ENCODE measurements at regions of chr20 and their contacts with region 1.

Region 1: DNA sequence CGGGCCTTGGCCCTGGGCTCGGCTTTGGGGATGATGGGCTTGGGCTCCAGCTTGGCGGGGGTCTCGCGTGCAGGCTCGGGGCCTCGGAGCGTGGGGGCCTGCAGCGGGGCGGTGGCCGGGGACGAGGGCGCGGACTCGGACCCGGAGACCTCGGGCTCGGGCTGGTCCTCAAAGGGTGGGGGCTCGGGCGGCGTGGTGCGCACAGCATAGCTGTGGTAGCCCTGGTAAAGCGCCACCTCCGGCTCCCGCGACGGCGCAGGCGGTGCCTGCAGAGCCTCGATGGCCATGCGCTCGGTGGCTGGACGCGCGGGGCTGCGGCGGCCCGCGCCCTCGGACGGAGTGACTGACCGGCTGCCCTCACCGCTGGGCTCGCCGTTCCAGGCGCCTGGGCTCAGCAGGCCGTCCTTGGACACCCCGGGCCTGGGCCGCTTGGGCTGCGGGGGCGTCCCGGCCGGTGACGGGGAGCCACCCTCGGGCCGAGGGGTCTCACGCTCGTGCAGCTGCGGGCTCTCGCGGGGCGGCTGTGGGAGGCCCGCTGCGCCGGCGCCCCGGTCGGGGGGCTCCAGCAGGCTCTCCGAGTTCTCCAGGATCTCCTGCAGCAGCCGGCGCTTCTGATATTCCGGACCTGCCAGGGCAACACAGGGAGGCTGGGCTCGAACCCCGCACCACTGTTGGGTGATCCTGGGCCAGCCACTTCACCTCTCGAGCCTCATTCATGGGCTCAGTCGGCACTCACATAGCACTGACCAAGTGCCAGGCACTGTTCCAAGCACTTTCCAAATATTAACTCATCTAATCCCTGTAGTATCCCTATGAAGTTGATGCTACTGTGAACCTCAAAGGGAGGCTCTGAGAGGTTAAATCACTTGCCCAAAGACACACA is 71.0 kb downstream of the JPH2 start:
- DNase-seq: no peak
- ATAC-seq: no peak
- H3K4me3 ChIP-seq: no peak overlapping the region
- H3K4me3 Mint-ChIP-seq: no peak overlapping the region
- H3K27ac ChIP-seq: no peak overlapping the region
- H3K27ac Mint-ChIP-seq: no peak overlapping the region
- H3K4me1 ChIP-seq: no peaks in the 10 kb centered on the region
- H3K4me1 Mint-ChIP-seq: peaks cover 3% of the 10 kb centered on the region
- H3K27me3 ChIP-seq: peaks cover 0 to 20% (median 5%) of the 10 kb centered on the region in 4 experiments
- H3K27me3 Mint-ChIP-seq: peaks cover 48% of the 10 kb centered on the region
- CTCF ChIP-seq: no peak

Region 2: DNA sequence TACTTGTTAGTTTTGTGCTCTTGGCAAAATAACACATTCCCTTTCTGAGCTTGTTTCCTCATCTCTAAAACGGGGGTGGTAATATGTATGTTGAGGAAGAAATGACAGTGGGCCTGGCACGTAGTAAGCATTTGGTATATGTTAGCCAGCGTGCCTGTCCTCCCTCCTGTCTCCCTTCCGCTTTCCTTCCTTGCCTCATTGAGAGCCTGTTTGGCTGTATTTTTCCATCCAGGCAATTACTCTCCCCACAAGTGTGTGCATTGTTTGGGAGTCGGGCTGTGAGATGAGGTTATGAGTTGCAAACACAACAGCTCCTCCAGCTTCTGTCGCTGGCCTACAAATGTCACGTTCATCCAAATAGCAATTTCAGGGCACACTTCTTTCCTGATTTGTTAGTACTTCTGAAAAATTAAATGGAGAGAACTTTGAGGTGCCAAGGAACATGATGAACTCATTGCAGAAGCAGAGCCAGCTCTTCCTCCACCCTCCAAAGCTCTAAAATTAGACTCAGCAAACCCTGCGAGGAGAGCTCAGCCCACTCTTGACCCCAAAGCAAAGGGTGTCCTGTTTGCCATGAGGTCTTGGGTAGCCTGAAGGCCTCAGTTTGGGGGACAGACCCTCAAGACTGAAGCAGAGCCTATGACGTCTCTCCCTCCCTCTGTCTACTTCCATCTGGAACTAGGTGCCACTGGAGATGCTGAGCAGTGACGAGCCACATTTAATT is 252.0 kb before region 1 on chr20:
- CTCF ChIA-PET with region 1: no interaction called
- POLR2A ChIA-PET with region 1: no interaction called
- intact Hi-C with region 1: no loop called
- DNase-seq: no peak
- ATAC-seq: no peak
- H3K4me3 ChIP-seq: no peak overlapping the region
- H3K4me3 Mint-ChIP-seq: no peak overlapping the region
- H3K27ac ChIP-seq: no peak overlapping the region
- H3K27ac Mint-ChIP-seq: no peak overlapping the region
- H3K4me1 ChIP-seq: no peaks in the 10 kb centered on the region
- H3K4me1 Mint-ChIP-seq: no peaks in the 10 kb centered on the region
- H3K27me3 ChIP-seq: peaks cover 0 to 3% (median 0%) of the 10 kb centered on the region in 4 experiments
- H3K27me3 Mint-ChIP-seq: peaks cover 5% of the 10 kb centered on the region
- CTCF ChIP-seq: no peak

Region 3: GRCh38 chr20:43963872-43964791 is 151.9 kb before region 1 on chr20:
- CTCF ChIA-PET with region 1: no interaction called
- POLR2A ChIA-PET with region 1: no interaction called
- intact Hi-C with region 1: no loop called
- DNase-seq: no peak
- ATAC-seq: no peak
- H3K4me3 ChIP-seq: no peak overlapping the region
- H3K4me3 Mint-ChIP-seq: no peak overlapping the region
- H3K27ac ChIP-seq: no peak overlapping the region
- H3K27ac Mint-ChIP-seq: no peak overlapping the region
- H3K4me1 ChIP-seq: peaks cover 9 to 20% of the 10 kb centered on the region in 2 donors
- H3K4me1 Mint-ChIP-seq: peaks cover 15% of the 10 kb centered on the region
- H3K27me3 ChIP-seq: no peaks in the 10 kb centered on the region
- H3K27me3 Mint-ChIP-seq: peaks cover 4% of the 10 kb centered on the region
- CTCF ChIP-seq: no peak

Region 4: DNA sequence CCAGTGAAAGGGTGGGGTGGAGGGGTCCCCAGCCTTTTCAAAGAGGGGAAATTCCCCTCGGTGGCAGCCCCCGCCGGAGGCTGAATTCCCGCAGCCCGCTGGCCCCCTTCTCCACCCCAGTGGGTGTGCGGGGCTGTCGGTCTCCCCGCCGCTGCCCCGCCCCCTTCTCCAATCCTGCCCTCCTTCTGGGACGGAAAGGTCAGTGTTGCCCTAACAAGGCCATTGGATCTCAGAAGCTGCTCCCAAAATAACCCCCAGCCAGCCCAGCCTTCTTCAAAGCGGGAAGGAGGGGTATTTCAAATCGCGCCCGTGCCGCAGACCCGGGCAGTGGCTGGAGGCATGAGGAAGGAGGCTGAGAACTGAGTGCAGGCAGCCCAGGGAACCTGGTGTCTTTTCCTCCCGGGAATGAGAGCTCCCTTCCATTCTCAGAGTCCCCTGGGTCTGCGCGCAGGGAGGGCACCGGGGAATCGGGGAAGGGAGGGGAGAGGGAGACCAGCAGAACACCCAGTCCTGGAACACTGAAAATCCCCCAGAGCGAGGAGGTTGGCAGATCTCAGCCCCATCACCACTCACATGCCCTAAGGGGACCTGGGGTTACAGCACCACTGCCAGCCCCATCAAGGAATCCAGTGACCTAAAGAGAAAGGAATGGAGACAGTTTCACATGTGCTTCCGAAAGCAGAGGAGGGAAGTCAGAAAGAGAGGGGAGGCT is 71.2 kb after region 1 on chr20 and contains the start of gene JPH2:
- CTCF ChIA-PET with region 1: interaction called, 78 read pairs
- POLR2A ChIA-PET with region 1: no interaction called
- intact Hi-C with region 1: no loop called
- DNase-seq: peak; percentile 27
- ATAC-seq: no peak
- H3K4me3 ChIP-seq: peak within 1 kb of the TSS in 4 of 5 experiments; percentile 0 to 42 (median 18)
- H3K4me3 Mint-ChIP-seq: peak within 1 kb of the TSS; percentile 80
- H3K27ac ChIP-seq: no peak within 1 kb of the TSS
- H3K27ac Mint-ChIP-seq: peak within 1 kb of the TSS; percentile 8
- H3K4me1 ChIP-seq: peaks cover 20 to 21% of the 10 kb centered on the region in 2 donors
- H3K4me1 Mint-ChIP-seq: peaks cover 32% of the 10 kb centered on the region
- H3K27me3 ChIP-seq: peaks cover 0 to 45% (median 15%) of the 10 kb centered on the region in 4 experiments
- H3K27me3 Mint-ChIP-seq: peaks cover 60% of the 10 kb centered on the region
- CTCF ChIP-seq: no peak
- total RNA-seq, gene JPH2: 0.10 and 0.17 TPM in 2 replicates

Region 5: DNA sequence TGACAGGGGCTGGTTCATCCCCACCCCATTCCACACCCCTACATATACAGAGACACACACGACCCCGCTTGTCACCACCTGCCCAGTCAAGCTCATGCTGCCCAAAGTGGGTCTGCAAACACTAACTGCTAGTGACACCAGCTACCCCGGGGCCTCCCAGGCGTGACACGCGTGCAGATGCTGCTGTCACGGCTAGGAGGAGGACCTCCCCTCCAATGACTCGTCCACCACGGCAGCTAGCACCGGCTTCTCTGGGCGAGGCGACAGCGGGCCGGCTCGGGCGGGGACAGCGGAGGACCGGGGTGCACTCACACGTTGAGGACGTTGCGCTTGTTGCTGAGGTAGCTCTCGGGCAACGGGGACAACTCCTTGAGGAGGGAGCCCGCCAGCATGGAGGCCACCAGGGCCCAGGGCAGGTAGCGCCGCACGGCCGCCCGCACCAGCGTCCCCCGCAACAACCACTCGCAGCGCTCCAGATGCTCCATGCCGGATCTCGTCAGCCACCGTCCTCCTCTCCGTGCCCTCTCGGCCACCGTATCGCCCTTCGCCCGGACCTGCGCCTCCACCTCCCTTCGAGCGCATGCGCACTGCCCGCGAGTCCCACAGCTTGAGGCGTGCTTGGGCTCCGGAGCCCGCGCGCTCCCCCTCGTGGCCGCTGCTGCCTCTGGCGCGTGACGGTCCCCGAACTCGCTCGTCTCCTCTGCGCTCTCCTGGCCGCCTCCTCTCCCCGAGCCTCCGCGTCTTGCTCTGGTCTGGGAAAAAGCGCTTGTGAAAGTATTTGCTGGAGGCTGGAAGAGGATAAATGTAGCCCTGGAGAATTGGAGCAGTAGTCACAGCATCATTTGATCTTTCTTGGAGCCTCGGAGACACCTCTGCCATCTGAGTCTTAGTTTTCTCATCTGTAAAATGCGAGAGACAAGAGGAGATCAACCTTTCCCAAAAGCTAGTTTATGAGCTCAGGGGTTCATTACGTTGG is 194.9 kb after region 1 on chr20 and contains the start of gene FITM2:
- CTCF ChIA-PET with region 1: interaction called, 25 read pairs
- POLR2A ChIA-PET with region 1: no interaction called
- intact Hi-C with region 1: no loop called
- DNase-seq: peak; percentile 98
- ATAC-seq: peak; percentile 97
- H3K4me3 ChIP-seq: peak within 1 kb of the TSS; percentile 62 to 96 (median 95)
- H3K4me3 Mint-ChIP-seq: peak within 1 kb of the TSS; percentile 95
- H3K27ac ChIP-seq: peak within 1 kb of the TSS in 1 of 2 donors; percentile 22
- H3K27ac Mint-ChIP-seq: peak within 1 kb of the TSS; percentile 96
- H3K4me1 ChIP-seq: peaks cover 10 to 16% of the 10 kb centered on the region in 2 donors
- H3K4me1 Mint-ChIP-seq: peaks cover 22% of the 10 kb centered on the region
- H3K27me3 ChIP-seq: no peaks in the 10 kb centered on the region
- H3K27me3 Mint-ChIP-seq: peaks cover 5% of the 10 kb centered on the region
- CTCF ChIP-seq: peak; percentile 97
- total RNA-seq, gene FITM2: 4.0 and 4.3 TPM in 2 replicates